Brain microvascular endothelial cell (primary cell): ENCODE measurements at regions of chr11 and their contacts with region 1.

Region 1: DNA sequence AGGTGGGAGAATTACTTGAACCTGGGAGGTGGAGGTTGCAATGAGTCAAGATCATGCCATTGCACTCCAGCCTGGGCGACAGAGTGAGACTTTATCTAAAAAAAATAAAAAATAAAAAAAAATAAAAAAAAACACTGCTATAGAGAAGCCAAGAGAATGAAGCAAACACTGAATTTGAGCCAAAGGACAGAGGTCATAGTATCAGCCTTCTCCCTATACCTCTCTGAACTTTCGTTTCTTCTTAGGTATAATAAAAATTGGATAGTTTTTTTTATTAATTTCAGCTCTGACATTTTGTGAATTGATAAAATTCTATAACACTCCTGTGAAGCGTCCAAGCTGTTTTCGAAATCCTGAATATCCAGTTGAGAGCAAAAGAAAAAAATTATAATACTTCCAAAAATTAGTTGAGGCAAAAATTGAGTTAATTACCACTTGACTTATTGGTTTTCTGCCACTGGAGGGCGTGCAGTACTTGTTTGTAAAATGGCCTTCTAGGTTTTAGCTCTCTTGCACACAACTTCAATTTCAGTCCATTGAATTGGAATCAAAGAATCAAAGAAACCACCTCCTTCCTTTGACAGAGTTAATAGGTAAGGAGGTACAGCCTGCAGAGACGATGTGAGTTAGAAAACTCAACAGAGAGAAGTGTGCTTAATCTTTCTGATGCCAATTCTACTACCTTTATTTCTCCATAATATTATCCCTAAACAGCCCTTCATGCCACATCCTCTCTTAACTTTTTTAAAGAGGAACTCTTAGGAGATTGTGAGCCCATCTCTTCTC is 143.2 kb downstream of the BBOX1 start:
- DNase-seq: peak; percentile 53
- H3K4me3 ChIP-seq: no peak overlapping the region
- H3K27ac ChIP-seq: no peak overlapping the region
- H3K27me3 ChIP-seq: no peaks in the 10 kb centered on the region
- CTCF ChIP-seq: peak; percentile 62

Region 2: DNA sequence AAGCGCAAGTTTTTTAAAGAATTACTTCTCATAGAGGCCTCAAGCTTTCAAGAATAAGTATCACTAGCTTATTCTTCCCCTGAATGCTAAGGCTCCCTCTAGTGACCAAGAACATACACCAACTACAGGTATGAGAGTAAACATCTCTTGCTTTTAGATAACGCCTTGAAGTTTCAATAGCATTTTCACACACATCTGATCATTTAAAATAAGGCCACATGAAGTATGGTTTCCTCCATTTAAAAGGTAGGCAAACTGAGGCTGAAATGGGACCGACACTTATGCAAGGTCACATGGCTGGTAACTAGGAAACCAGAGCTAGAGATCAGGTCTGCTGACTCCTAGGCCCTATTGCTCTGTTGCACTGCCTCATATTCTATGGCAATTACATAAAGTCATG is 112.6 kb after region 1 on chr11:
- in situ Hi-C with region 1: loop called (anchors 25 kb)
- DNase-seq: peak; percentile 41
- H3K4me3 ChIP-seq: no peak overlapping the region
- H3K27ac ChIP-seq: no peak overlapping the region
- H3K27me3 ChIP-seq: no peaks in the 10 kb centered on the region
- CTCF ChIP-seq: peak; percentile 66

Region 3: GRCh38 chr11:27485930-27486773 is 302.3 kb after region 1 on chr11:
- in situ Hi-C with region 1: loop called (anchors 25 kb)
- DNase-seq: peak; percentile 64
- H3K4me3 ChIP-seq: no peak overlapping the region
- H3K27ac ChIP-seq: no peak overlapping the region
- H3K27me3 ChIP-seq: no peaks in the 10 kb centered on the region
- CTCF ChIP-seq: peak; percentile 64

Region 4: DNA sequence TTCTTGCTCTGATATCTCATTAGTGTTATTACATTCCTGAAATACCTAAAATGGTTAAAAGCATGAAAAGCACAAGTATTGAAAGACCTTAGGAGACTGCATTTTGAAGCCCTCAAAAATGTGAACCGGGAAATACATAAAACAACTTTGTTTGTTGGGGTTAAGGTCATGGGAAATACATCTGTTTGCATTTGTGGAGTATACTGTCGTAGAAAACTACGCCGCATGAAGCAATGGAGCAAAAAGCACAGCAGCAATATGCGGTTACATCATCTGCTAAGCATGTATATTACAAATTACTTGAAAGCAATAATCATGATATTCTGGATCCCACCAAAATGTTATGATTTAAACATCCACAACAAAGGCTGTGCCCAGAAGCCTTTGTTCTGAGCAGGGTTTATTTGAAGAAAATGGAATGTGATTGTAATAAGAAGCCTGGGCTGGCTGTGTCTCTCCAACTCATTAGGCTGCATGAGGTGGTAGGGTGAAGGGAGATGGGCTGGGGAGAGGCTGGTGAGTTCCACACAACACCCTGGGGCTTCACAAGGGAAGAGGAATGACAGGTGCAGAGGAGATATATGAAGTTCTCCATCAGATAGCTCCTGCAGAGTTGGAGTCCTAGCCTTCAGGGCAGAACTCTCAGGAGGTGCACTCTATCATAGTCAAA is 387.4 kb after region 1 on chr11:
- in situ Hi-C with region 1: no loop called
- DNase-seq: peak; percentile 83
- H3K4me3 ChIP-seq: no peak overlapping the region
- H3K27ac ChIP-seq: peak overlapping the region; percentile 29
- H3K27me3 ChIP-seq: no peaks in the 10 kb centered on the region
- CTCF ChIP-seq: no peak